Activated CD4-positive, alpha-beta T cell treated with anti-CD3 and anti-CD28 coated beads, Interleukin-2, amount 10 ng/mL, durations not matched to agents 24 days and 14 days (primary cell): ENCODE measurements at regions of chr11 and their contacts with region 1.

Region 1: GRCh38 chr11:110349138-110349996 is 53.0 kb upstream of the RDX start:
- DNase-seq: peak; percentile 88
- H3K4me3 Mint-ChIP-seq: peak overlapping the region; percentile 78
- H3K27ac Mint-ChIP-seq: peak overlapping the region; percentile 99
- H3K4me1 Mint-ChIP-seq: peaks cover 65% of the 10 kb centered on the region
- H3K27me3 Mint-ChIP-seq: no peaks in the 10 kb centered on the region

Region 2: DNA sequence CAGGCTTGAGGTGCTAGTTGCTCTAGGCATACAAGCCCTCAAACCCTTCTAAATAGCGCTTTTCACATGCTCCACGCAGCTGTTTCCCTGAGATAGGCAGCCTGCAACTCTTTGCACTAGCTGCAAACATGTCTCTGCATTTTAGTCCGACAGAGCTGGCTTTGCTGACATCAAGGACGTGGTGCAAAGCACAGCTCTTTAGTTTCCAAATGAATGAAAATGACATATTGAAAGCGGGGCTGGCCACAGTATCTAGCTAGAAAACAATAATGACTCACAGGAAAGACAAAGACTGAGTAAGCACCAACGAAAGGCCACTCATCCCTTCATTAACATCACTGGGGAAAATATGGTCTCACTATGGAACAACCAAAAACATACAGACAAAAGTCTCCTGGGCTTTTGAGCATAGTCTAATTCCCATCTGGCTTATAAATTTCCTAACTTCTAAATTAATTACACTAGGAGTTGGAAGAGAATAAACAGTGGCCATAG is 271.5 kb before region 1 on chr11:
- intact Hi-C with region 1: loop called (anchors 2 kb)
- DNase-seq: peak; percentile 80
- H3K4me3 Mint-ChIP-seq: peak overlapping the region; percentile 43
- H3K27ac Mint-ChIP-seq: peak overlapping the region; percentile 95
- H3K4me1 Mint-ChIP-seq: peaks cover 26% of the 10 kb centered on the region
- H3K27me3 Mint-ChIP-seq: peaks cover 5% of the 10 kb centered on the region

Region 3: GRCh38 chr11:110296226-110297075 is 52.9 kb before region 1 on chr11 and contains the start of gene RDX:
- intact Hi-C with region 1: loop called (anchors 1 kb)
- DNase-seq: peak; percentile 90
- H3K4me3 Mint-ChIP-seq: peak within 1 kb of the TSS; percentile 97
- H3K27ac Mint-ChIP-seq: peak within 1 kb of the TSS; percentile 91
- H3K4me1 Mint-ChIP-seq: peaks cover 38% of the 10 kb centered on the region
- H3K27me3 Mint-ChIP-seq: no peaks in the 10 kb centered on the region
- total RNA-seq, gene RDX: 87.6 and 88.4 TPM in 2 replicates

Region 4: GRCh38 chr11:110327508-110327907 is 21.9 kb before region 1 on chr11:
- intact Hi-C with region 1: loop called (anchors 1 kb)
- DNase-seq: no peak
- H3K4me3 Mint-ChIP-seq: peak overlapping the region; percentile 88
- H3K27ac Mint-ChIP-seq: peak overlapping the region; percentile 96
- H3K4me1 Mint-ChIP-seq: peaks cover 19% of the 10 kb centered on the region
- H3K27me3 Mint-ChIP-seq: no peaks in the 10 kb centered on the region

Region 5: DNA sequence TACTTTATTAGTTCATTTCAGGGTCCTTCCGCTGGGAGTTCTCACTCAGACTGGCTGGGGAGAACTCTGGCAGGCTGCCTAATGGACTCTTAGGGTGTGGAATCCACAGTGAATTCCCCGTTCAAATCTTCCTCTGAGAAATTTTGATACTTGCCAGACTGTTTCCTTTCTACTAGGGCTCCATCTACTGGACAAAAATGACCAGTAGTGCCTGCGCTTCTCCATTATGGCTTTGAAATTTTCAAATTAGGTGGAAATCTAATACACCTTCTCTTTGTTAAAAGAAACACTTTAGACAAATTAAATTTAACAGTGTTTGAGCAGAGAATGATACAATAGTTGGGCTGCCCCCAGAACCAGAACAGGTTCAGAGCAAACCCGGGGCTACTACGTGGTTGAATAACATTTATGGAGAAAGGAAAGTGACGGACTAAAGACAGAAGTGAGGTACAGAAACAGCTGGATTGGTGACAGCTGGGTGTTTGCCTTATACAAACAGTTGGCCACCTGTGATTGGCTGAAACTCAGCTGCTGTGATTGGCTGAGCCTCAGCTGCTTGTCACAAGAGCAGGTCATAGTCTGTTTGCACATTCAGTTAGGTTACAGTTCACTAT is 27.5 kb after region 1 on chr11:
- intact Hi-C with region 1: loop called (anchors 1 kb)
- DNase-seq: peak; percentile 82
- H3K4me3 Mint-ChIP-seq: no peak overlapping the region
- H3K27ac Mint-ChIP-seq: no peak overlapping the region
- H3K4me1 Mint-ChIP-seq: peaks cover 24% of the 10 kb centered on the region
- H3K27me3 Mint-ChIP-seq: no peaks in the 10 kb centered on the region

Region 6: DNA sequence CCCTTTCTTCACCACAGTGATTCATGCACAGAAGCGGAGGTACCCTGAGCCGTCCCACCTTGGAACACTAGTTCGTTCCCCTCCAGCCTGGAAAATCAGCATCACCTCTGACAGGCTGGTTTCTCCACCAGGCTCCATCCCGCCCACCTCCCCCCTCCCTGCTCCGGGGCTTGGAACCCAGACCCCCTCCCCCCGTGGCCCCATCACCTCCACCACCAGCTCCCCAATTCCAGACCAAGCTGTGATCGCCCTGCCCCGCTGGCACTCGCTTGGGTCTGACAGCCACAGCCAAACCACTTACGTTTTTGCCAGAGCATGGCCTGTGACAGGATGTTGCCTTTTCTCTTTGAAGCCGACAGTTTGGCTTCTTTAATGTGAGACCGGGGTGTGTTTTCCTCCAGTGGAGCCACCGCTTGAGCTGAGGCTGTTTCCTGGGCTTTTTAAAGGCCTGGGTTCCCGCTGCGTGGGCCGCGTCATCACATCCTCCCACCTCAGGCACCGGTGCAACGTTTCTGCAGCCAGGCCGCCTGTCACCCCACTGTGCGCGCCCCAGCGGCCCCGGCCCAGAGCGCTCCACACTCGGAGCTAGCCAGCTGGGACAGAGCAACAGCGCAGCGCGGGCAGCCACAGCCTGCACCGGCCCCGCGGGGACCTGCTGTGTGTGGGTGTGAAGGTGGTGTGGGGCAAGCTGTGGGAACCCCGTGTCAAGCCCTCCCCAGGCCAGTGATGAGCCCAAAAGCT is 1029.7 kb after region 1 on chr11 and contains the start of gene POU2AF1:
- intact Hi-C with region 1: loop called (anchors 2 kb)
- DNase-seq: peak; percentile 92
- H3K4me3 Mint-ChIP-seq: peak within 1 kb of the TSS; percentile 93
- H3K27ac Mint-ChIP-seq: peak within 1 kb of the TSS; percentile 99
- H3K4me1 Mint-ChIP-seq: peaks cover 61% of the 10 kb centered on the region
- H3K27me3 Mint-ChIP-seq: no peaks in the 10 kb centered on the region
- total RNA-seq, gene POU2AF1: 65.6 and 68.9 TPM in 2 replicates

Region 7: GRCh38 chr11:111938687-111939160 is 1589.4 kb after region 1 on chr11:
- intact Hi-C with region 1: loop called (anchors 10 kb)
- DNase-seq: peak; percentile 81
- H3K4me3 Mint-ChIP-seq: peak overlapping the region; percentile 91
- H3K27ac Mint-ChIP-seq: peak overlapping the region; percentile 95
- H3K4me1 Mint-ChIP-seq: peaks cover 50% of the 10 kb centered on the region
- H3K27me3 Mint-ChIP-seq: no peaks in the 10 kb centered on the region